Activated B cell treated with CpG ODN at 0.5 μM for 24 hours (primary cell): ENCODE measurements at regions of chr6 and their contacts with region 1.

Region 1: GRCh38 chr6:10534419-10534762 is 13.2 kb downstream of the GCNT2 start:
- DNase-seq: peak; percentile 45
- ATAC-seq: peak; percentile 58
- H3K4me3 Mint-ChIP-seq: peak overlapping the region; percentile 88
- H3K27ac Mint-ChIP-seq: peak overlapping the region; percentile 99
- H3K4me1 Mint-ChIP-seq: peaks cover 92% of the 10 kb centered on the region
- H3K27me3 Mint-ChIP-seq: no peaks in the 10 kb centered on the region
- CTCF ChIP-seq: no peak

Region 2: DNA sequence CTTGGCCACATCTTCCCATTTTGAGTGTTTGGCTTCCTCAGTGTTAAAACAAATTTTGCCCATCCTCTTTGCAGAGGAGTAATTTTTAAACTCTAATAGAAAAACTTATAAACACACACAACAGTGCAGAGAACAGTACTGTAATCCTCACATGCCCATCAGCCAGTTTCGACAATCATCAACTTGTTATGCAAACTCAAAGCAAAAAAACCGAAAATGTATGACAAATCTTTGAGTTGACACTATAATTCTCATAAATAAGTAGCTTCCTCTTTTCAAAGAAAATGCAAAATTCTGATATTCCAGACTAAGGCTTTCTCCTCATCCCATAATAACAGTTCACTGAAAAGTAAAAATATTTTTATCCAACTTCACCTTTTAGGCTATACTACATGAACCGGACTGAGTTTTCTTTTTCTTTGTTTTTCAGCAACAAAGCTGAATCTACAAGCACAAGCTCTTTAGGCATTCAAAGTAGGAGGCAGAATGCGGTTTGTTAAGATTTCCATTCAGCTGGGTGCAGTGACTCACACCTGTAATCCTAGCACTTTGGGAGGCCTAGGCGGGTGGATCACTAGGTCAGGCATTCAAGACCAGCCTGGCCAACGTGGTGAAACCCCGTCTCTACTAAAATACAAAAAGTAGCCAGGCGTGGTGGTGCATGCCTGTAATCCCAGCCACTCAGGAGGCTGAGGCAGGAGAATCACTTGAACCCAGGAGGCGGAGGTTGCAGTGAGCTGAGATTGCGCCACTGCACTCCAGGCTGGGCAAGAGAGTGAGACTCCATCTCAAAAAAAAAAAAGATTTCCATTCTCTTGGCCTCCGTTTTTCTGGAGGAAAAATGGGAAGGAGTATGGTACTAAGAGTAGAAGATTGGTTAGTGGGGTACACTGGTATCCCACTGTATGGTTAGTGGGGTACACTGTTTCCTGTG is 61.6 kb after region 1 on chr6:
- CTCF ChIA-PET with region 1: no interaction called
- POLR2A ChIA-PET with region 1: no interaction called
- intact Hi-C with region 1: loop called (anchors 5 kb)
- DNase-seq: no peak
- ATAC-seq: no peak
- H3K4me3 Mint-ChIP-seq: no peak overlapping the region
- H3K27ac Mint-ChIP-seq: peak overlapping the region; percentile 70
- H3K4me1 Mint-ChIP-seq: peaks cover 59% of the 10 kb centered on the region
- H3K27me3 Mint-ChIP-seq: no peaks in the 10 kb centered on the region
- CTCF ChIP-seq: no peak

Region 3: GRCh38 chr6:10694302-10695085 is 160.1 kb after region 1 on chr6 and contains the starts of genes C6orf52 and PAK1IP1:
- CTCF ChIA-PET with region 1: no interaction called
- POLR2A ChIA-PET with region 1: interaction called, 38 read pairs
- intact Hi-C with region 1: loop called (anchors 1 kb)
- DNase-seq: peak; percentile 84
- ATAC-seq: peak; percentile 94
- H3K4me3 Mint-ChIP-seq: peak within 1 kb of the TSS; percentile 99
- H3K27ac Mint-ChIP-seq: peak within 1 kb of the TSS; percentile 100
- H3K4me1 Mint-ChIP-seq: peaks cover 29% of the 10 kb centered on the region
- H3K27me3 Mint-ChIP-seq: no peaks in the 10 kb centered on the region
- CTCF ChIP-seq: no peak
- total RNA-seq, gene C6orf52: 1.0 and 1.6 TPM in 2 replicates
- total RNA-seq, gene PAK1IP1: 18.1 and 18.3 TPM in 2 replicates

Region 4: GRCh38 chr6:10886691-10887535 is 352.5 kb after region 1 on chr6 and contains the start of gene SYCP2L:
- CTCF ChIA-PET with region 1: no interaction called
- POLR2A ChIA-PET with region 1: no interaction called
- intact Hi-C with region 1: loop called (anchors 5 kb)
- DNase-seq: no peak
- ATAC-seq: peak; percentile 10
- H3K4me3 Mint-ChIP-seq: peak within 1 kb of the TSS; percentile 67
- H3K27ac Mint-ChIP-seq: no peak within 1 kb of the TSS
- H3K4me1 Mint-ChIP-seq: peaks cover 39% of the 10 kb centered on the region
- H3K27me3 Mint-ChIP-seq: peaks cover 48% of the 10 kb centered on the region
- CTCF ChIP-seq: no peak
- total RNA-seq, gene SYCP2L: 0.13 and 0.17 TPM in 2 replicates

Region 5: DNA sequence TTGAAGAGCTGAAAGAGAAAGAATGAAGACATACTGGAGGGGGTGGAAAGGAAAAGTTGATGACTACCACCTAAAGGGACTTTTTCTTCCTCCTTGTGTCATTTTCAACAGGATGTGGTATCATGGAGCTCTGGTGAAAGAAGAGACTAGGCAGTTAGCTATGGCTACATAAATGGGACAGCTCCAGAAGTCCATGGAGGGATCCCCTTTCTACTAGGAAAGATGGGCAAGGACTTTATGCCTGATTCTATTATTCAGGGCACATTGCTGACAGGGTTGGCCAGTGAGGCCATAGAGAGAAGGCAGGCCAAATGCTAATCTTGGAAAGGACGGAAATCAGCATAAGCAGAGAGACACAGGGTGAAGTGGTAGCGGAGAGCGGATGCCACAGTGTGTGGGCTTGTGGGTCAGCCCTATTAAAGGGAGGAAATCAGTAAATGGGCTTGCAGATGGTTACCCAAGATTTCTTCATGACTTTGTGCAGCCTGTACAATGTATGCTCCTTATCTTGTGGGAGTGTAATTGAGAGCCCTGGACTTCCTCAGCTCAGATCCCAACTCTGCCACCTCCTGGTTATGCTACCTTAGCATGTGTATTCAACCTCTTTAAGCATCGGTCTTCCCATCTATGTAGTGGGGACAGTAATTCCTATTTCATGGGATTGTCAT is 925.7 kb after region 1 on chr6:
- CTCF ChIA-PET with region 1: no interaction called
- POLR2A ChIA-PET with region 1: no interaction called
- intact Hi-C with region 1: loop called (anchors 5 kb)
- DNase-seq: peak; percentile 22
- ATAC-seq: peak; percentile 18
- H3K4me3 Mint-ChIP-seq: peak overlapping the region; percentile 80
- H3K27ac Mint-ChIP-seq: peak overlapping the region; percentile 96
- H3K4me1 Mint-ChIP-seq: peaks cover 78% of the 10 kb centered on the region
- H3K27me3 Mint-ChIP-seq: no peaks in the 10 kb centered on the region
- CTCF ChIP-seq: no peak